Activated CD4-positive, alpha-beta T cell treated with anti-CD3 and anti-CD28 coated beads, Interleukin-2, amount 10 ng/mL, durations not matched to agents 24 days and 14 days (primary cell): ENCODE measurements at regions of chr11 and their contacts with region 1.

Region 1: DNA sequence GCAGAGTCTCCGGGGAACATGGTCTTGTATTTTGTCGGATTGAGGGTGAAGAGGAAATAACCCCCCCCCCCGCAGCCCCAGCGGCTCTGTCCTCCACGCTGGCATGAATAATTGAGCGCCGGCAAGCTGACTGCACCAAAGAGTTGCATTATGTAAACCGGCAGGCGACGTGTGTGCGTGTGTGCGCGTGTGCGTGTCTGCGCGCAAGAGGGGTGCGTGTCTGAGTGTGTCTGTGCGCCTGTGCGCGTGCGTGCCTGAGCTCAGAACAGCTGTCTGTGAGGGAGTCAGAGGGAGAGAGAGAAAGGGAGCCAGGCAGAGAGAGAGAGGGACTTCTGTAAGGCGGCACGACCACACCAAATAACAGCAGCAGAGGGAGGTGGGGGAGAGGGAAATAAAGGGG is 94.4 kb downstream of the SCN3B start:
- DNase-seq: peak; percentile 79
- H3K4me3 Mint-ChIP-seq: peak overlapping the region; percentile 75
- H3K27ac Mint-ChIP-seq: peak overlapping the region; percentile 86
- H3K4me1 Mint-ChIP-seq: peaks cover 25% of the 10 kb centered on the region
- H3K27me3 Mint-ChIP-seq: no peaks in the 10 kb centered on the region

Region 2: GRCh38 chr11:123429913-123430720 is 129.9 kb before region 1 on chr11 and contains the start of gene GRAMD1B:
- intact Hi-C with region 1: no loop called
- DNase-seq: peak; percentile 96
- H3K4me3 Mint-ChIP-seq: peak within 1 kb of the TSS; percentile 87
- H3K27ac Mint-ChIP-seq: peak within 1 kb of the TSS; percentile 90
- H3K4me1 Mint-ChIP-seq: peaks cover 55% of the 10 kb centered on the region
- H3K27me3 Mint-ChIP-seq: no peaks in the 10 kb centered on the region
- total RNA-seq, gene GRAMD1B: 117 TPM in 2 replicates

Region 3: GRCh38 chr11:123511037-123511870 is 48.8 kb before region 1 on chr11:
- intact Hi-C with region 1: loop called (anchors 2 kb)
- DNase-seq: peak; percentile 90
- H3K4me3 Mint-ChIP-seq: no peak overlapping the region
- H3K27ac Mint-ChIP-seq: peak overlapping the region; percentile 34
- H3K4me1 Mint-ChIP-seq: peaks cover 44% of the 10 kb centered on the region
- H3K27me3 Mint-ChIP-seq: no peaks in the 10 kb centered on the region